GM10248 (cell line): ENCODE measurements at regions of chr20 and their contacts with region 1.

Region 1: GRCh38 chr20:41173161-41173721 is 35.9 kb downstream of the PLCG1 start:
- DNase-seq: peak; percentile 81
- CTCF ChIP-seq: peak; percentile 94

Region 2: GRCh38 chr20:41136680-41137613 is 36.3 kb before region 1 on chr20 and contains the start of gene PLCG1:
- CTCF ChIA-PET with region 1: interaction called, 16 read pairs
- POLR2A ChIA-PET with region 1: no interaction called
- DNase-seq: peak; percentile 95
- CTCF ChIP-seq: no peak

Region 3: GRCh38 chr20:41161886-41162285 is 11.4 kb before region 1 on chr20:
- CTCF ChIA-PET with region 1: interaction called, 76 read pairs
- POLR2A ChIA-PET with region 1: no interaction called
- DNase-seq: no peak
- CTCF ChIP-seq: no peak

Region 4: GRCh38 chr20:41185013-41185757 is 11.9 kb after region 1 on chr20:
- CTCF ChIA-PET with region 1: interaction called, 11 read pairs
- POLR2A ChIA-PET with region 1: no interaction called
- DNase-seq: no peak
- CTCF ChIP-seq: no peak

Region 5: GRCh38 chr20:41218466-41218865 is 45.2 kb after region 1 on chr20:
- CTCF ChIA-PET with region 1: interaction called, 11 read pairs
- POLR2A ChIA-PET with region 1: no interaction called
- DNase-seq: no peak
- CTCF ChIP-seq: no peak

Region 6: GRCh38 chr20:41232973-41233926 is 60.0 kb after region 1 on chr20:
- CTCF ChIA-PET with region 1: interaction called, 23 read pairs
- POLR2A ChIA-PET with region 1: no interaction called
- DNase-seq: no peak
- CTCF ChIP-seq: no peak

Region 7: GRCh38 chr20:41308290-41308711 is 135.1 kb after region 1 on chr20:
- CTCF ChIA-PET with region 1: interaction called, 12 read pairs
- POLR2A ChIA-PET with region 1: no interaction called
- DNase-seq: no peak
- CTCF ChIP-seq: no peak